H1 (cell line): ENCODE measurements at regions of chr1 and their contacts with region 1.

Region 1: DNA sequence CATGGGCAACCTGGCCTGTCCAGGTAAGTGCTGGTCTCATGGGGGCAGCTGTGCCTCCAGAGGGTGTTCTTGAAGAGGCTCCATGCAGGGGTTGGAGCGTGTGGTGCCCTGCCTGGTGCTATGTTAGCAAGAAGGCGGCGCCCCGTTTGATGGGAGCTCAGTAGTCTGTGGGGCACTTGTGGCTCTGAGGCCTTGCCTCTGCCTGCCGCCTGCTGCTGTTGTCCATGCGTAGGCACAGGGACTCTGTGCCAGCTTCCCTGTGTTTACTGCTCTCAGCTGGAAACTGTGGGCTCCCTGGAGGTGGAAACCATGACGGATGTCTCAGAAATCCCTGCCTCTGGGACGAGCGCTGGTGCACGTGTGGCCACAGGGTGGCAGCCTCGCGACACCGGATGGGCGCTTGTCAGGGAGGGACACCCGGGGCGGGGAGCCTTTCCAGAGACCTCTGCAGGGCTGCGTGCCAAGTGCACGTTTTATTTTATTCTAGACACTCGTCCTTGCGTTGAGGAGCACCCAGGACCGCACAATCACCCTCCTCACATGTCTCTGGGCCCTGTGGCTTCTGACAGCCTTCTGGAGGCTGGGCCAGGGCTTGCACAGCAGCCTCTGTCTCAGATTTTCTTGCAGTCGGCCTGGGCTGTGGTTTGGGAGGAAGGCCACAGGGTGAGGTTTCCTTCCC is 27.1 kb downstream of the SNAP47 start:
- DNase-seq: peak; percentile 47 to 92
- H3K4me3 ChIP-seq: no peak overlapping the region
- H3K27ac ChIP-seq: no peak overlapping the region
- H3K4me1 ChIP-seq: peaks cover 0 to 5% (median under 1%) of the 10 kb centered on the region in 4 experiments; a peak in 3 of 7 replicates
- H3K27me3 ChIP-seq: no peaks in the 10 kb centered on the region
- CTCF ChIP-seq: peak; percentile 94 to 98 (median 95)
- EP300 ChIP-seq: no peak
- POLR2A ChIP-seq: no peak
- RAD21 ChIP-seq: peak; percentile 96 to 99

Region 2: GRCh38 chr1:227621211-227621610 is 141.2 kb before region 1 on chr1:
- CTCF ChIA-PET with region 1: no interaction called
- POLR2A ChIA-PET with region 1: no interaction called
- DNase-seq: peak in 1 of 2 experiments; percentile 2
- H3K4me3 ChIP-seq: no peak overlapping the region
- H3K27ac ChIP-seq: no peak overlapping the region
- H3K4me1 ChIP-seq: peaks cover 0 to 2% (median 0%) of the 10 kb centered on the region in 4 experiments; a peak in 1 of 7 replicates
- H3K27me3 ChIP-seq: no peaks in the 10 kb centered on the region
- CTCF ChIP-seq: no peak
- EP300 ChIP-seq: no peak
- POLR2A ChIP-seq: no peak
- RAD21 ChIP-seq: no peak

Region 3: DNA sequence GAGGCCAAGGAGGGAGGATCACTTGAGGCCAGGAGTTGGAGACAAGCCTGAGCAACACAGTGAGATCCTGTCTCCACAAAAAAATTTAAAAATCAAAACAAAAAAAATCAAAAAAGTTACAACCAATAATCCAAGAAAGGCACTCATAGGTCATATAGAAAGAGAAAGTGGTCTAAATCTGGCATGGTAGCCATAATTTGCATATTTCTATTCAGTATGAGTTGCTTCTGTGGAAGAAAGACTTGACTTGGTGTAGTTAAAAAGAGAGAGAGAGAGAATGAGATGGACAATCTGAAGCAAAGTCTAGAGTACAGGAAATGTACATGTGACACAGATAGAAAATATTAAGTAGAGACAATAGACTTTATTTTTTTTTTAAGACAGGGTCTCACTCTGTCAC is 49.7 kb before region 1 on chr1:
- CTCF ChIA-PET with region 1: no interaction called
- POLR2A ChIA-PET with region 1: no interaction called
- DNase-seq: no peak
- H3K4me3 ChIP-seq: no peak overlapping the region
- H3K27ac ChIP-seq: no peak overlapping the region
- H3K4me1 ChIP-seq: no peaks in the 10 kb centered on the region
- H3K27me3 ChIP-seq: no peaks in the 10 kb centered on the region
- CTCF ChIP-seq: no peak
- EP300 ChIP-seq: no peak
- POLR2A ChIP-seq: no peak
- RAD21 ChIP-seq: no peak

Region 4: DNA sequence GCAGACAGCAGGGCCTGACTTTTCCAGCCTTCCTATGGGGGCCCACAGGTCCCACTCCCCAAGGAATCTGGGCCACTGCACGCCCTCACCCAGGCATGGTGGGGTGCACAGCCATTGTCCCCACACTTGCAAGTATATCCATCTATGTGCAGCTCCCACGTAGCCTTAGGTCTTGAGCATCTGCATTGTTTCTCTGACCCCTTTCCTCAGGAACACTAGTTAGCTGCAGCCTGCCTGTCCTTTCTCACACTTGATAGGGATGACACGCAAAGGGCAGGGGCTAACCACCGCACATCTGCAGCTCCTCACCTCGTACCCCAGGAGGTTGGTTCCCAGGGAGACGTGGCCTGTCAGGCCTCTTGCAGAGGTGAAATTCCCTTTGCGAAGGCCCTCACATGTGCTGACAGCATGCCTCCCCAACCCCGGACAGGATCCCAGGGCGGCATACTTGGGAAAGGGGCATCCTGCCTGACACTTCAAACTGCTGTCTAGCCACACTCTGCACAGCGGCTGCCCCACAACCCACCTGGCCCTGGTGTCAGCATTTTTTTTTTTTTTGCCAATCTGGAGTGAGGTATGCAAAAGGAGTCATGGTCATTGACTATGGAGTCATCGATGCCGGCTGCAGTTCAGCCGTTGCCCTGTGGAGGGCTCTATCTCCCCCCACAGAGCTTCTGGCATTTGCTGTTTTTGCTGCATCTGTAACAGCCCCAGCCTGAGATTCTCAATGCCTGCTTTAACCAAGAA is 32.3 kb before region 1 on chr1:
- CTCF ChIA-PET with region 1: interaction called, 11 read pairs
- POLR2A ChIA-PET with region 1: interaction called, 3 read pairs
- DNase-seq: peak; percentile 27 to 81
- H3K4me3 ChIP-seq: no peak overlapping the region; a peak in 2 of 8 replicates
- H3K27ac ChIP-seq: no peak overlapping the region
- H3K4me1 ChIP-seq: peaks cover 0 to 19% (median 13%) of the 10 kb centered on the region in 4 experiments; a peak in 6 of 7 replicates
- H3K27me3 ChIP-seq: no peaks in the 10 kb centered on the region
- CTCF ChIP-seq: peak in 2 of 3 experiments; percentile 75 to 78; a peak in 3 of 4 replicates
- EP300 ChIP-seq: no peak
- POLR2A ChIP-seq: peak in 1 of 2 experiments; percentile 45; a peak in 2 of 3 replicates
- RAD21 ChIP-seq: peak; percentile 56 to 67

Region 5: DNA sequence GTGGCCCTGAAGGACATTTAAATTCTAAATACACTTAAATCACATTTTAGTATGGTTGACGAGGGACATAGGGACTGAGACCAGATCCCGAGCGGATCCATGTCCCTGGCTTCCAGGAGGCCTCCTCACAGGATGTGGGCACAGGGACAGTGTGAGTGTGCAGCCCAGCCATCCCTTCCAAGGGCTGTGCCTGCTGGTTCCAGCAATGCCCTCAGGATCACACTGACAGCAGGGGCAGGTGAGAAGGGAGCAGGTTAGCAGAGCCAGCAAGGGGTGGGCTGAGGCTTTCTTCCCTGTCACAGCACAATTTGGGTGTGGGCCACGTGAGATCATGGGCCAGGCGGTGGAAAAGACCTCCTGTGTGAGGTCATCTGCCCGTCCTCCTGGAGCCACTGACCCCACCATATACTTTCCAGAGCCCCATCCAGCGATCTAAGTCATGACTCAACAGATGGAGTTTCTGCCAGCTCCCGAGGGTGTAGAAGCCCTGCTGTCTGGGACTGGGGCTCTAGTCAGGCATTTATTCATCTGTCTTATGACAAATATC is 16.1 kb after region 1 on chr1:
- CTCF ChIA-PET with region 1: interaction called, 51 read pairs
- POLR2A ChIA-PET with region 1: interaction called, 3 read pairs
- DNase-seq: no peak
- H3K4me3 ChIP-seq: no peak overlapping the region
- H3K27ac ChIP-seq: no peak overlapping the region
- H3K4me1 ChIP-seq: no peaks in the 10 kb centered on the region
- H3K27me3 ChIP-seq: no peaks in the 10 kb centered on the region
- CTCF ChIP-seq: no peak
- EP300 ChIP-seq: no peak
- POLR2A ChIP-seq: no peak
- RAD21 ChIP-seq: no peak

Region 6: GRCh38 chr1:227855687-227856086 is 93.3 kb after region 1 on chr1:
- CTCF ChIA-PET with region 1: no interaction called
- POLR2A ChIA-PET with region 1: no interaction called
- DNase-seq: no peak
- H3K4me3 ChIP-seq: no peak overlapping the region
- H3K27ac ChIP-seq: no peak overlapping the region
- H3K4me1 ChIP-seq: no peaks in the 10 kb centered on the region
- H3K27me3 ChIP-seq: no peaks in the 10 kb centered on the region
- CTCF ChIP-seq: no peak
- EP300 ChIP-seq: no peak
- POLR2A ChIP-seq: no peak
- RAD21 ChIP-seq: no peak

Region 7: DNA sequence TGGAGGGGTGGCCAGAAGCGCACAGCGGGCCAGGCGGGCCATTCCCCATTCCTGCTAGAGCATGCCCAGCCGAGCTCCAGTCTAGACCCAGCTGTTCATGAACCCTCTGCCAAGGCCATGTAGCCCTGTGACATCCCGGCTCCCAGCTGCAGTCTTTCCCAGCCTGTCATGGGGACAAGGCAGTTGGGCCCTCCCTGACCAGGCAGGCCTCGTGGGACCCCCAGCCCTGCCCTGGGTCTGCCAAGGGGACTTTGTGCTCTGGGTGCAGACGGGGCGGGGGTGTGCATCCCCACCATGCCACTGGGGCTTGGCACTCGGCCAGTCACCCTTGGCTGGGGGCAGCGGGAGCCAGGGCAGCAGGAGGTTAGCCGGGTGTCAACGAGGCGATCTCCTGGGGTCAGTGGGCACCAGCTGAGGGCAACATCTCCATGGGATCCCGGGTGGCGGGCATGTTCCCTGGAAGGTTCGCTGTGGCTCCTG is 141.7 kb after region 1 on chr1:
- CTCF ChIA-PET with region 1: interaction called, 11 read pairs
- POLR2A ChIA-PET with region 1: no interaction called
- DNase-seq: no peak
- H3K4me3 ChIP-seq: no peak overlapping the region
- H3K27ac ChIP-seq: no peak overlapping the region
- H3K4me1 ChIP-seq: peaks cover 0 to 11% (median 0%) of the 10 kb centered on the region in 4 experiments; a peak in 3 of 7 replicates
- H3K27me3 ChIP-seq: no peaks in the 10 kb centered on the region; a peak in 2 of 7 replicates
- CTCF ChIP-seq: no peak
- EP300 ChIP-seq: no peak
- POLR2A ChIP-seq: no peak
- RAD21 ChIP-seq: no peak

Region 8: DNA sequence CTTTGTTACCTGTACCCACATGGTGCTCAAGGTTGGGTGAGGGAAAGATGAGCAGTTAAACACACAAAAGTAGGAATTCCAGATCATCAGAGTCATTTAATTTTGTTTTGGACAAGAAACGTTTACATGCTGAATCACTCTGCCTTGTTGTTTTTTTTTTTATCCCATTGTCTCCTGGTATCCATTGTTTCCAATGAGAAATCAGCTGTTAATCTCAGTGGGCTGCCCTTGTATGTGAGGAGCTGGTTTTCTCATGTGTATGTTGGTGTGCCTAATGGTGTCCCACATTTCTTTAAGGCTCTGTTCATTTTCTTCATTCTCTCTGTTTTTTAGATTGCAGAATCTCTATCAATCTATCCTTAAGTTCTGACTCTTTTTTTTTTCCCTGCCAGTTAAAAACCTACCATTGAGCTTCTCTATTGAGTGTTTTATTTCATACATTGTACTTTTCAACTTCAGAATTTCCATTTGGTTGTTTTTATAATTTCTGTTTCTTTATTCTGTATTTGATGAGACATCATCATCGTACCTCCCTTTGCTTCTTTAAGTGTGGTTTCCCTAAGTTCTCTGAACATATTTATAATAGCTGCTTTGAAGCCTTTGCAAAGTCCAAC is 436.7 kb after region 1 on chr1:
- CTCF ChIA-PET with region 1: no interaction called
- POLR2A ChIA-PET with region 1: no interaction called
- DNase-seq: no peak
- H3K4me3 ChIP-seq: no peak overlapping the region
- H3K27ac ChIP-seq: no peak overlapping the region
- H3K4me1 ChIP-seq: no peaks in the 10 kb centered on the region
- H3K27me3 ChIP-seq: peaks cover 0 to 5% (median under 1%) of the 10 kb centered on the region in 4 experiments; a peak in 1 of 7 replicates
- CTCF ChIP-seq: no peak
- EP300 ChIP-seq: no peak
- POLR2A ChIP-seq: no peak
- RAD21 ChIP-seq: no peak